Ovary (tissue), 10 donors: ENCODE measurements at regions of chr2 and their contacts with region 1.

Region 1: DNA sequence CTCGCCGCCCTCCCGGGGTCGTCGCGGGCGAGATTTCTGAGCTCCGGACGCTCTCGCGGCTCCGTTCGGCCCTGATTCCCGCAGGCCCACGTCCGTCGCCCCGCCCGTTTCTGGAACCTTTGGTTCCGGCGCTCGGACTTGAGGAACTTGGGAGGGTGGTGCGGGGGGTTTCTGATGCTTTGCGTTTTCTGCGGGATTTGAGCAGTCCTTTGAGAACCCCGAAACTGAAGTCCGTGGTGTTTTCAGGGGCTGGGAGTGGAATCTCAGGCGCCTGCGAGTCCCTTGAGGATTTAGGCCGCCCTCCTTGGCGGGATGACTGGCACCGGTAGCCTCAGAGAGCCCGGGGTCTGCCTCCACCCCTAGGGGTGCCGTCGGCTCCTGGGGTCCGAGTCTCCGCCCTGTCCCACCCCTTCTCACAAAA is 336 bp downstream of the THNSL2 start:
- DNase-seq: no peak
- H3K4me3 ChIP-seq: peak overlapping the region; percentile 53
- H3K27ac ChIP-seq: peak overlapping the region in 1 of 2 donors; percentile 59
- H3K4me1 ChIP-seq: peaks cover 5% of the 10 kb centered on the region
- H3K27me3 ChIP-seq: no peaks in the 10 kb centered on the region
- CTCF ChIP-seq: no peak
- EP300 ChIP-seq: no peak
- POLR2A ChIP-seq: no peak

Region 2: GRCh38 chr2:88055371-88056128 is 114.9 kb before region 1 on chr2 and contains the start of gene KRCC1:
- intact Hi-C with region 1: loop called in 3 of 4 experiments (anchors 10 kb)
- DNase-seq: peak; percentile 91 to 95 (median 93)
- H3K4me3 ChIP-seq: peak within 1 kb of the TSS; percentile 95
- H3K27ac ChIP-seq: peak within 1 kb of the TSS; percentile 95 to 96
- H3K4me1 ChIP-seq: peaks cover 7% of the 10 kb centered on the region
- H3K27me3 ChIP-seq: no peaks in the 10 kb centered on the region
- CTCF ChIP-seq: no peak
- EP300 ChIP-seq: no peak
- POLR2A ChIP-seq: peak; percentile 86
- total RNA-seq, gene KRCC1: 17.1 to 24.2 (median 21.4) TPM

Region 3: GRCh38 chr2:88897715-88898114 is 727.2 kb after region 1 on chr2:
- intact Hi-C with region 1: no loop called
- DNase-seq: no peak
- H3K4me3 ChIP-seq: no peak overlapping the region
- H3K27ac ChIP-seq: no peak overlapping the region
- H3K4me1 ChIP-seq: no peaks in the 10 kb centered on the region
- H3K27me3 ChIP-seq: no peaks in the 10 kb centered on the region
- CTCF ChIP-seq: no peak
- EP300 ChIP-seq: no peak
- POLR2A ChIP-seq: no peak